ENCODE measurements at regions of chr1 and their contacts with region 1.

Region 1: GRCh38 chr1:235999259-235999925 is 65.5 kb downstream of the NID1 start:
- DNase-seq: peak; percentile 77
- H3K4me3 Mint-ChIP-seq: peak overlapping the region; percentile 32
- H3K27ac Mint-ChIP-seq: peak overlapping the region; percentile 94
- H3K4me1 Mint-ChIP-seq: peaks cover 80% of the 10 kb centered on the region
- H3K27me3 Mint-ChIP-seq: peaks cover 3% of the 10 kb centered on the region

Region 2: DNA sequence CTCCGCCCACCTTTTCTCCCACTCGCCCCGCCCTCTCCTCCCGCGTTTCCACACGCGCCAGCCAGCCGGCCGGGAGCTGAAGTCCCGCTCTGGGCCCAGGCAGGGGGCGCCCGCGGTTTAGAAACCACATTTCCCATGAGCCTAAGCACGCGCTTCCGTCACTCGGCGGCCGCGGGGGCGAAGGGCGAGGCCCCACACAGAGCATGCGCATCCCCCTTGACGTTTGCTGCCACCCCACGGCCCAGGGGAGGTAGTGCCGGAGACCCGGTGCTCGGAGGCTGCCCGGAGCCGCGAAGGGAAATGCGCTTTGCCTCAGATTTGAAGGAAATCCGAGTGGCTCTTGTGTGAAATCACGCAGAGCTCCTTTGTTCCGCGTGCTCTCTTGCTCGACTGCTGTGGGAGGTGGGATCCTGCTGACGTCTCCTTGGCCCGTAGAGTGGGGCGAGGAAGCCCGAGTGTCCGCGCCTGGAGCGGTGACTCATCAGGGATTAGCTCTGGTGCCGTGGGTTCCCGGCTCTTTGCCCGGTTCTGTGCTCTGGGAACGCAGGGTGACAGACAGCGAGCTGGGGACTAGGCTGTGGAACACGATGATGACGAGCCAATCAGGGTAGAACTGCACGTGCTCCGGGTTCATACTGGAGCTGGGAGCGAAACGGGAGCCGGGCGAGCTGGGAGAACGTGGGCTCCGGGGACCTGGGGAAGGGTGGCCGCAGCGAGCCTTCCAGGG is 494.7 kb before region 1 on chr1:
- intact Hi-C with region 1: loop called (anchors 1 kb)
- DNase-seq: peak; percentile 98
- H3K4me3 Mint-ChIP-seq: peak overlapping the region; percentile 92
- H3K27ac Mint-ChIP-seq: peak overlapping the region; percentile 97
- H3K4me1 Mint-ChIP-seq: peaks cover 41% of the 10 kb centered on the region
- H3K27me3 Mint-ChIP-seq: peaks cover 16% of the 10 kb centered on the region

Region 3: DNA sequence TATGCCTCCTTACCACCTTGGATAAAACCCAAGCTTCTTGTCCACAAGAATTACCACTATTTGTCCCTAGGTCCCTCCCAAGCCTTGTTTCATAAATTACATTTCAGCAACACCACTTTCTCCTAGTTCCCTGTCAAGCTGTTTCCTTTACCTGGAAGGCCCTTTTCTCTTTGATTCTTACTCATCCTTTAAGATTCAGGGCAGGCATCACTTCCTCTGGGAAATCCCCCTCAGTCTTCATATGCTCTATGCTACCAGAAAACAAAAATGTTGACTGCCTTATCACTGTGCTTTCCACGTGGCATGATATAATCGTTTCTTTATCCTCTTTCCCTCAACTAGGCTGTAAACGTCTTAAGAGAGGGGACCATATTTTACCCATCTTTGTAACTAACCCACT is 235.4 kb before region 1 on chr1:
- intact Hi-C with region 1: loop called (anchors 1 kb)
- DNase-seq: peak; percentile 16
- H3K4me3 Mint-ChIP-seq: no peak overlapping the region
- H3K27ac Mint-ChIP-seq: no peak overlapping the region
- H3K4me1 Mint-ChIP-seq: peaks cover 14% of the 10 kb centered on the region
- H3K27me3 Mint-ChIP-seq: no peaks in the 10 kb centered on the region

Region 4: DNA sequence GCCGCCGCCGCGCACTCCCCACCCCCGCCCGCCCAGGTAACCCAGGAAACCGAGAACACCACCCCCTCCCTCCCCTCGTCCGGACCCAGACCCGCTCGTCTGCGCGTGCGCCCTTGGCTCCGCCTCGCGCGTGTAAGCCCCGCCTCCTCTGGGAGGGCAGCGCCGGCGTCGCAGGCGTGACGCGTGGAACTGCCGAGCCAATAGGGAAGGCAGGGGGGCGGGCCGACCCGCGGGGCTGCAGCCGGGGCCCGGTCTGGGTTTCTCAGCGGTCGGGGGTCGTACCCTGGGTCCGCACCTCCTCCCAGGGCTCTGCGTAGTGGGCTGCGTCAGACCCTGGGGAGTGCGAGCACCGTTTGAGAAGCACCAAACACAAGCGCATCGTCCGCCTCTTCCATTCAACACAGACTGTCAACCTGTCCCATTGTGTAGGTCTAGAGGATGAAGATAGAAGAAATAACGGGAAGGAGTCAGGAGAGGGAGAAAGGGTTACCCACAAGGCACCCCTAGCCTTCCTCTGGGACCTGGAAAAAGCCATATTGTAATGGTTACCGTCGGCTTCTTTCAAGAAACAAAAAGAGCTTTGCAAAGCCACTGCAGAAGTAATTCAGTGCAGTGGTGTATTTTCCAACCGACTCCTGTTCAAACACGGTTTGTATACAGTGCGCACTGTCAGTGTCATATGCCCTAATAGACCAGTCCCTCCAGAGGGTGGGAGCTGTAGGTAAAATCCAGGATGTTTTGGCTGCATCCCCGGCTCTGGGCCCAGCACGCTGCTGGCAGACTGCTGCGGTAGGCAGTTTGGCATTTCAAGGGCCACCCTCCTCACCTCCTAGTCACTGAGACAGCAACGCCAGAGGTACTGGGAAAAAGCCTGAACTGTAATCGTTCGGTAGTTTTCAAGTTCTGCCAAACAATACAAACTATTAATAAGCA is 132.2 kb before region 1 on chr1:
- intact Hi-C with region 1: loop called (anchors 1 kb)
- DNase-seq: peak; percentile 99
- H3K4me3 Mint-ChIP-seq: peak overlapping the region; percentile 98
- H3K27ac Mint-ChIP-seq: peak overlapping the region; percentile 98
- H3K4me1 Mint-ChIP-seq: peaks cover 57% of the 10 kb centered on the region
- H3K27me3 Mint-ChIP-seq: no peaks in the 10 kb centered on the region

Region 5: GRCh38 chr1:235910357-235911299 is 88.8 kb before region 1 on chr1:
- intact Hi-C with region 1: loop called (anchors 1 kb)
- DNase-seq: no peak
- H3K4me3 Mint-ChIP-seq: peak overlapping the region; percentile 41
- H3K27ac Mint-ChIP-seq: peak overlapping the region; percentile 60
- H3K4me1 Mint-ChIP-seq: peaks cover 37% of the 10 kb centered on the region
- H3K27me3 Mint-ChIP-seq: no peaks in the 10 kb centered on the region

Region 6: DNA sequence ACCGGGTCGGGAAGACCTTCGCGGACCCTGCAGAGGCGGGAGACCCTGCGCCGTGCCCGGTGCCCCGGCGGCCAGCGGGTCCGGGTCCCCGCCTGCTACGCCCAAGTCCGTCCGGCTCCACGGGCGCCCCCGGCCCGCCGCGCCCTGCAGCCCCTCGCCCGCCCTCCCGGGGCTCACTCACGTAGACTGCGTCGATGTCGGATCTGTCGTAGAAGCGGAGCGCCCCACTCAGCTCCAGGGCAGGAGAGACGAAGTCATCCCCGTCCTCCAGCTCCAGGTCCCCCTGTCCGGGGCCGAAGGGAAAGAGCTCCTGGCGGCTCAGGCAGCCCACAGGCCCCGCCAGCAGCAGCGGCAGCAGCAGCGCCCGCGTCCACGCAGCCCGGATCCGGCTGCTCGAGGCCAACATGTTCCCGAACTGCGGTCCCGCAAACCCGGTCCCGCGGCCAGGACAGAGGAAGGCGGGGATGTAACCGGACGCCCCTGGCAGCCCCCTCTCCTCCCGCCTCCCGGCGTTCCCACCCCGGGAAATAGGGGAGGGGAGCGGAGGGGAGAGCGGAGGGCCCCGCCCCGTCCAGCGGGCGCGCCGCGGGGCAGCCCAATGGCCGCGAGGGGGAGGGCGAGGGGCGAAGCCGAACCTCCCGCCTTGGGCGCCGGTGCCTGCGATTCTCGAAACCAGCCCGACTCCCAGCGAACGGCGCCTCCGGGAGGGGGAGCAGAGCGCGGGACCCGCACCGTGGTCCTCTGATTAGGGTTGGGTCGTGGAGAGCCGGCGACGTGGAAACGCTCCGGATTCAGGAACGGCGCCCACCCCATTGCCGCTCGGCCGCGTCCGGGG is 65.5 kb after region 1 on chr1 and contains the start of gene NID1:
- intact Hi-C with region 1: loop called (anchors 1 kb)
- DNase-seq: peak; percentile 11
- H3K4me3 Mint-ChIP-seq: peak within 1 kb of the TSS; percentile 61
- H3K27ac Mint-ChIP-seq: no peak within 1 kb of the TSS
- H3K4me1 Mint-ChIP-seq: peaks cover 29% of the 10 kb centered on the region
- H3K27me3 Mint-ChIP-seq: peaks cover 53% of the 10 kb centered on the region
- total RNA-seq, gene NID1: 0.44 and 0.65 TPM in 2 replicates

Region 7: GRCh38 chr1:236603991-236604904 is 604.9 kb after region 1 on chr1 and contains the start of gene HEATR1:
- intact Hi-C with region 1: loop called (anchors 1 kb)
- DNase-seq: peak; percentile 85
- H3K4me3 Mint-ChIP-seq: peak within 1 kb of the TSS; percentile 98
- H3K27ac Mint-ChIP-seq: peak within 1 kb of the TSS; percentile 90
- H3K4me1 Mint-ChIP-seq: peaks cover 37% of the 10 kb centered on the region
- H3K27me3 Mint-ChIP-seq: peaks cover 8% of the 10 kb centered on the region
- total RNA-seq, gene HEATR1: 83.6 and 85.2 TPM in 2 replicates